Adrenal gland (tissue), 19 donors: ENCODE measurements at regions of chr7 and their contacts with region 1.

Region 1: GRCh38 chr7:26500749-26501352 is 209.2 kb downstream of the SNX10 start:
- DNase-seq: no peak
- H3K4me3 ChIP-seq: no peak overlapping the region
- H3K27ac ChIP-seq: no peak overlapping the region
- H3K4me1 ChIP-seq: no peaks in the 10 kb centered on the region
- H3K27me3 ChIP-seq: no peaks in the 10 kb centered on the region
- CTCF ChIP-seq: peak; percentile 24 to 62 (median 45)
- POLR2A ChIP-seq: no peak

Region 2: DNA sequence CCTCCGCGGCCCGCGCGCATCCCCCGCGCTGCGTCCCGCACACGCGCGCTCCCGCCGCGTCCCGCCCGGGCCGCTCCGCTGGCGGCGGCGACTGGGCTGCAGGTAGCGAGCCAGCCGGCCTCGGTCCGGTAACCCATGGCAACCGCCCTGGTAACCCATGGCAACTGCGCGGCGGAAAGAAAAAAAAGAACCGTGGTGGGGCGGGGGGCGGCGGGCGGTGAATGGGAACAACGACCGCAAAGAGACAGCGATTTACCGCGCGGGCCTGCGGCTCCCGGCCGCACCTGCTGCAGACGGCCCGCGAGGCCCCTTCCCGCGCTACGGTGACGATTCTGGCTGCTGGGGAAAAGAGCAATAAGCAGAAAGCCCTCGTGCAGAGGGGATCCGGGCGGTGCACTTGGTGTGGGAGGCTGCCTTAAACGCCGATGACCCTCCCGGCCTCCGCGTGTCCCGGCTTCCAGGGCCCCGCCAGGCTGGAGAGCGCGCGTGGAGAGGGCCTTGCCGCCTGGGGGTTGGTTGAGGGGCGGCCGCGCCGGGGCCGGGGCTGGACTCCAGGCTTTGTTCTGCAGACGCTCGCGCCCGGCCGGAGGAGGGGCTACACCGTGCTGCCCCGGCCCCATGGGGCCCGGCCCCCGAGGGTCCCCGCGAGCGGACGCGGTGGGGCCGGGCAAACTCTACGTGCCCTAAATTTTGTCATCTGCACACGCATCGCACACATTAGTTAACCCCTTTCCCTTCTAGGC is 124.5 kb before region 1 on chr7:
- intact Hi-C with region 1: loop called (anchors 5 to 10 kb)
- DNase-seq: peak; percentile 38 to 83 (median 65)
- H3K4me3 ChIP-seq: peak overlapping the region in 3 of 4 donors; percentile 50 to 64 (median 50)
- H3K27ac ChIP-seq: peak overlapping the region in 4 of 5 donors; percentile 49 to 76 (median 67)
- H3K4me1 ChIP-seq: peaks cover 0 to 8% of the 10 kb centered on the region in 2 donors
- H3K27me3 ChIP-seq: peaks cover 3% of the 10 kb centered on the region
- CTCF ChIP-seq: peak in 1 of 6 experiments; percentile 0
- POLR2A ChIP-seq: peak in 1 of 2 donors; percentile 24

Region 3: GRCh38 chr7:26534649-26535482 is 34.0 kb after region 1 on chr7:
- intact Hi-C with region 1: no loop called
- DNase-seq: no peak
- H3K4me3 ChIP-seq: no peak overlapping the region
- H3K27ac ChIP-seq: no peak overlapping the region
- H3K4me1 ChIP-seq: no peaks in the 10 kb centered on the region
- H3K27me3 ChIP-seq: peaks cover 24% of the 10 kb centered on the region
- CTCF ChIP-seq: no peak
- POLR2A ChIP-seq: no peak